Left ventricle myocardium inferior (tissue), 1 donor: ENCODE measurements at regions of chr2 and their contacts with region 1.

Region 1: GRCh38 chr2:203484266-203485112 is 50.6 kb downstream of the RAPH1 start:
- DNase-seq: no peak
- H3K4me3 ChIP-seq: no peak overlapping the region
- H3K27ac ChIP-seq: no peak overlapping the region
- H3K4me1 ChIP-seq: peaks cover 11% of the 10 kb centered on the region
- H3K27me3 ChIP-seq: no peaks in the 10 kb centered on the region
- CTCF ChIP-seq: peak; percentile 77

Region 2: GRCh38 chr2:201618744-201619662 is 1865.5 kb before region 1 on chr2:
- intact Hi-C with region 1: no loop called
- DNase-seq: peak; percentile 83
- H3K4me3 ChIP-seq: peak overlapping the region; percentile 56
- H3K27ac ChIP-seq: no peak overlapping the region
- H3K4me1 ChIP-seq: no peaks in the 10 kb centered on the region
- H3K27me3 ChIP-seq: no peaks in the 10 kb centered on the region
- CTCF ChIP-seq: peak; percentile 58

Region 3: GRCh38 chr2:203814661-203815540 is 330.4 kb after region 1 on chr2:
- intact Hi-C with region 1: loop called (anchors 10 kb)
- DNase-seq: peak; percentile 39
- H3K4me3 ChIP-seq: no peak overlapping the region
- H3K27ac ChIP-seq: peak overlapping the region; percentile 51
- H3K4me1 ChIP-seq: peaks cover 36% of the 10 kb centered on the region
- H3K27me3 ChIP-seq: no peaks in the 10 kb centered on the region
- CTCF ChIP-seq: peak; percentile 89

Region 4: DNA sequence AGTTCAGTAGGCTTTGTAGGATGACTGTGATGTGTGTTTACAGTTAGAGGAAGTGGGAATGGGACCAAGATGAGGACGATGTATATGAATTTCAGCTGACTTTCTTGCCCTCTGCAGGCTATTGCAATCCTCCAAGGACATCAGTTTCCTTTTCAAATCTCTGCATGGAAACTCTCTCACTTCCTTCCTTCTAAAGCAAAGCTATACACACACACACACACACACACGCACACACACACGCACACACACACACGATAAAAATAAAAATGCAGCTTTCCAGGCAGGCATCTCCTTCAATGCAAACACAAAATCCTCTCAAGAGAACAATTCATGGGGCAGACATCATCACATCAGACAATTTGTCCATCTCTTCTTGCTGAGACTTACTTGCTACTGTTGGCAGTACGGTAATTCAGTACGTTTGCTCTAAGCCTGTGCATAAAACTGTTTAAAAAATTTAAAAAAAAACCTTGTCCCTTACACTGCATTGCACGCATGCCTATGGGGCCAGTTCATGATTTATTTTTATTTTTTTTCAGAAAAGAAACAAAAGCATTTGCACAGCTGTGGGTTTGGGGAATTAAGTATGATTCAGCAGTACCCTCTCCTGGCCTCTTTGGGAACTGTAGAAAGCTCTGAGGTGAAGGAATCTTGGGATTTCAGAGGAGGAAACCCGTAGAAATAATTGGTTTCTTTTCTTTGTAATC is 424.9 kb after region 1 on chr2:
- intact Hi-C with region 1: loop called (anchors 10 kb)
- DNase-seq: no peak
- H3K4me3 ChIP-seq: peak overlapping the region; percentile 48
- H3K27ac ChIP-seq: peak overlapping the region; percentile 52
- H3K4me1 ChIP-seq: peaks cover 15% of the 10 kb centered on the region
- H3K27me3 ChIP-seq: no peaks in the 10 kb centered on the region
- CTCF ChIP-seq: peak; percentile 87